Activated CD4-positive, alpha-beta T cell treated with anti-CD3 and anti-CD28 coated beads for 36 hours (primary cell): ENCODE measurements at regions of chr16 and their contacts with region 1.

Region 1: GRCh38 chr16:30893744-30894539 is at the start of gene BCL7C:
- DNase-seq: peak; percentile 92
- ATAC-seq: peak; percentile 74
- H3K4me3 Mint-ChIP-seq: peak within 1 kb of the TSS; percentile 84
- H3K27ac Mint-ChIP-seq: peak within 1 kb of the TSS; percentile 88
- H3K4me1 Mint-ChIP-seq: peaks cover 35% of the 10 kb centered on the region
- H3K27me3 Mint-ChIP-seq: no peaks in the 10 kb centered on the region
- total RNA-seq, gene BCL7C: 19.5 to 20.4 TPM

Region 2: DNA sequence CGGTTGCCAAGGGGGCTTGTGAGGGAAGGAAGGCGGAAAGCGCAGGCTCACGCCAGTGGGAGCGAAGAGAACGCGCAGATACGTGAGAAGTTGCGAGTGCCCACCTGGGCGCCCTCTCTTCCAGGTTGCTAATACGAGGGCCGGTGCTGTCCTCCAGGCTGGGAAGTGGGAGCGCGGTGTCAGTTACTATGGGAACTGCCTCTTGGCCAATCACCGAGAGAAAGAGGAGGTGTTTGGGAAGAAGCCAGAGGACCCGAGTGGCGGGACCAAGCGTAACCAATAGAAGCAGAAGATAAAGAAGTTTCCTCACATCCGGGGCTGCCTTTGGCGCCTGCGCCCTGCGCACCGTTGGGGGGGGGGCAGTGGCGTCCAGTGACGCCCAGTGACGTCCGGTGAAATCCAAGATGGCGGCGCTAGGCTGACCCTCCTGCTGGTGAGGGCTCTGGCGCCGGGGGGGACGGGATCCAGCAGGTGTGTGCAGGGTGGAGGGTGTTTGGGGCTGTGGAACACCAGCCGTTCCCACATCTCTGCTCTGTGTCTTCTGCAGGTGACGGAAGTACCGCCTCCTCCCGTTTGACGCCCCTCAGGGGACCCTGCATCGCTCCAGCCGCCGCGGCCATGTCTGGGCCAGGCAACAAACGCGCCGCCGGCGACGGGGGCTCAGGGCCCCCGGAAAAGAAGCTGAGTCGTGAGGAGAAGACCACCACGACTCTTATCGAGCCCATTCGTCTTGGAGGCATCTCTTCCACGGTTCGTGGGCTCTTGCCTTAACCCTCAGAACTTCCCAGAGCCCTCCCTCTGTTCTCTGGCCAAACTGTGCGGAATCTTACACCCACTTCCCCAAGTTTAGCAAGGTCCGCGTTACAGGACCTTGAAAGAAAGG is 131.8 kb before region 1 on chr16 and contains the starts of genes CFAP119 and RNF40:
- CTCF ChIA-PET with region 1: no interaction called
- POLR2A ChIA-PET with region 1: no interaction called
- intact Hi-C with region 1: loop called in 1 of 2 experiments (anchors 1 kb)
- DNase-seq: peak; percentile 94
- ATAC-seq: peak; percentile 98
- H3K4me3 Mint-ChIP-seq: peak within 1 kb of the TSS; percentile 90
- H3K27ac Mint-ChIP-seq: peak within 1 kb of the TSS; percentile 83
- H3K4me1 Mint-ChIP-seq: peaks cover 25% of the 10 kb centered on the region
- H3K27me3 Mint-ChIP-seq: no peaks in the 10 kb centered on the region
- total RNA-seq, gene CFAP119: 1.7 to 3.1 TPM
- total RNA-seq, gene RNF40: 72.3 to 85.5 TPM

Region 3: DNA sequence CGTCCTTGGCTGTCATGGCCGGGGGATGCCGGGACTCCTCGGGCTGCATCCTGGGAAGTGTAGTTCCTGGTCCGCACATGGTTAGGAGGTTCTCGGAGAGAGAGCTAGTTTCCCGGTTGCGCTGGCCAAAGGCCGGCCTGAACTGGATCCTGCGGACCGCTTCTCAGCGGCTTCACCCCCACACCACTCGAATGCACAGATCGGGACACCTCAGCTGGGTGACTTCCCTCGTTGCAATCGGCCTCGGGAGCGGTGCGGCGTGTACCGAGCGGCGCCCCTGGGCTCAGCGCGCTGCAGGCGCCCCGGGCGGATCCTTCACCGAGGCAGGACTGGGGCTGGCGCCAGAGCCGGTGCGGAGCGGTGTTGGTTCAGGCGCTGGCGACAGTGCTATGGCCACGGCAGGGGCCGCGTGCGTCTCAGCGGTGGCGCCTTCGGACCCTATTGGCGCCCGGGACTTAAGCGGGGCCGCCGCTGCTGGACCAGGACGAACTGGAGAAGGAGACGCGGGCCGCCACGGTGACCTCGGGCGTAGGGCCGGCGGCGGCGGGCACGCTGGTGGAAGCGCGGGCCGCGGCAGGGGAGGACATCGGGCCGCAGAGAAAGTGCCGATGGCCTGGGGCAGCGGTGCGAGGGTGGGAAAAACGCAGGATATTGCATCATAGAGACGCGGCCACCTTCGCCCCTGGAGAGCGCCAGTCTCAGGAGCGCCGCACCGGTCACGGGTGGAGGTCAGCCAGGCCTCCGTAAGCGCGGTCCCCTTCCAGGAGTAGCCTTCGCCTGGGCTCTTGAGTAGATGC is 118.4 kb before region 1 on chr16:
- CTCF ChIA-PET with region 1: no interaction called
- POLR2A ChIA-PET with region 1: no interaction called
- intact Hi-C with region 1: loop called in 1 of 2 experiments (anchors 1 kb)
- DNase-seq: peak; percentile 80
- ATAC-seq: peak; percentile 85
- H3K4me3 Mint-ChIP-seq: peak overlapping the region; percentile 83
- H3K27ac Mint-ChIP-seq: peak overlapping the region; percentile 93
- H3K4me1 Mint-ChIP-seq: peaks cover 15% of the 10 kb centered on the region
- H3K27me3 Mint-ChIP-seq: no peaks in the 10 kb centered on the region

Region 4: DNA sequence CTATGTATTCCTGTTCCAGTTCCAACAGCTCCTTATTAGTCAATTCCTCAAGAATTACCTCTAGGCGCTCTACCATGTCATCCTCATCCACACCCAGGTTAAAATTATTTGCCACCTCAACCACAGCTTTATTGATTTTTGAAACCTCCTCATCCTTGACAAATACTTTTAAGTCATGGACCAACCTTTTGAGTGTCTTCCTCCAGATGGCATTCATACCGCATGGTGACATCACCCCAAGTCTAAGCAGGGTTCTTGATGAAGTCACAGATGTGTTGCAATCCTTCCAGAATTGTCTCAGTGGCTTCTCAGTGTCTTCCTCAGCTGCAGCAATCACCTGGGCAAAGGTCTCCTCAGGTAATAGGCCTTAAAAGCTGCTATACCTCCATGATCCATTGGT is 40.2 kb before region 1 on chr16:
- CTCF ChIA-PET with region 1: no interaction called
- POLR2A ChIA-PET with region 1: interaction called, 11 read pairs
- intact Hi-C with region 1: no loop called
- DNase-seq: no peak
- ATAC-seq: no peak
- H3K4me3 Mint-ChIP-seq: no peak overlapping the region
- H3K27ac Mint-ChIP-seq: no peak overlapping the region
- H3K4me1 Mint-ChIP-seq: no peaks in the 10 kb centered on the region
- H3K27me3 Mint-ChIP-seq: no peaks in the 10 kb centered on the region

Region 5: GRCh38 chr16:30874821-30875717 is 18.9 kb before region 1 on chr16:
- CTCF ChIA-PET with region 1: no interaction called
- POLR2A ChIA-PET with region 1: interaction called, 3 read pairs
- intact Hi-C with region 1: loop called (anchors 1 to 2 kb)
- DNase-seq: peak; percentile 94
- ATAC-seq: peak; percentile 82
- H3K4me3 Mint-ChIP-seq: peak overlapping the region; percentile 87
- H3K27ac Mint-ChIP-seq: peak overlapping the region; percentile 93
- H3K4me1 Mint-ChIP-seq: peaks cover 24% of the 10 kb centered on the region
- H3K27me3 Mint-ChIP-seq: no peaks in the 10 kb centered on the region